AG04450 (cell line): ENCODE measurements at regions of chr14 and their contacts with region 1.

Region 1: DNA sequence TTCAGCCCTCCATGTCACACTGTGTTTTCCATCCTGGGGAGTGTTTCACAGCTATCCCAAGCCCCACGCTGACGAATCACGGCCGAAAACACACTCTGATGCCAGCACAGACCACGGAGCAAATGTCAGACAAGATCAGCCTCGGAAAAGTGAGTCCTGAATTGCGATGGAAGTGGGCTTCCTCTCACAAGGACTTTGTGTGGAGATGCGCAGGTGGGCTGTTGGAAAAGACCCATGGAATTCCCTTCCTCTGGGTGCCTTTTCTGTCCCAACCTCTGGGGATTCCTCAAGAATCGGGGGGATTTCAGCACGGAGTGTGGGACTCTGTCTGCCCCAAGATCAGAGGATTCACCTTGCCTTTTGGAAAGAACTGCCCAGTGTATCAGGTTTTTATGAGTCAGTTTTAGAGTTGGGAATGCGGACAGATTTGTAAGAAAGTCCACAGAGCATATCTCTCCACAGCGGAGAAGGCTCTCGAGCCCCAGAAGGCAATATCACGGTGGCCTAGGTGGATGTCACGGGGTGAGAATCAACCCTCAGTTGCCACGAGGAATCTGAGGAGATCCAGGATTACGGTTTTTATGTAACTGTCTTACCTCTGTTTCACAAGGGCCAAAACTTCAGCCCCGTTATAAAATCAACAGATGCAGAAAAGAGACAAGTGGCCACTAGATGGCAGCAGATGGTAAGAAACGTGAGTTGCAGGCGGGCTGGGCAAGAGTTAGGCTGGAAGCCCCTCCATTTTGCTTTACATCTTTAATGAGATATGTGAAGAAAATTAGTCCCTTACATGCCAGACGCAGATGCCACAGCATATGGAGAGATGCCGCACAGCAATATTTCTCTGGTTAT is 201.9 kb downstream of the DAD1 start:
- DNase-seq: peak; percentile 47
- H3K4me3 ChIP-seq: no peak overlapping the region
- H3K27ac ChIP-seq: no peak overlapping the region
- H3K27me3 ChIP-seq: peaks cover 5% of the 10 kb centered on the region
- CTCF ChIP-seq: peak; percentile 74

Region 2: DNA sequence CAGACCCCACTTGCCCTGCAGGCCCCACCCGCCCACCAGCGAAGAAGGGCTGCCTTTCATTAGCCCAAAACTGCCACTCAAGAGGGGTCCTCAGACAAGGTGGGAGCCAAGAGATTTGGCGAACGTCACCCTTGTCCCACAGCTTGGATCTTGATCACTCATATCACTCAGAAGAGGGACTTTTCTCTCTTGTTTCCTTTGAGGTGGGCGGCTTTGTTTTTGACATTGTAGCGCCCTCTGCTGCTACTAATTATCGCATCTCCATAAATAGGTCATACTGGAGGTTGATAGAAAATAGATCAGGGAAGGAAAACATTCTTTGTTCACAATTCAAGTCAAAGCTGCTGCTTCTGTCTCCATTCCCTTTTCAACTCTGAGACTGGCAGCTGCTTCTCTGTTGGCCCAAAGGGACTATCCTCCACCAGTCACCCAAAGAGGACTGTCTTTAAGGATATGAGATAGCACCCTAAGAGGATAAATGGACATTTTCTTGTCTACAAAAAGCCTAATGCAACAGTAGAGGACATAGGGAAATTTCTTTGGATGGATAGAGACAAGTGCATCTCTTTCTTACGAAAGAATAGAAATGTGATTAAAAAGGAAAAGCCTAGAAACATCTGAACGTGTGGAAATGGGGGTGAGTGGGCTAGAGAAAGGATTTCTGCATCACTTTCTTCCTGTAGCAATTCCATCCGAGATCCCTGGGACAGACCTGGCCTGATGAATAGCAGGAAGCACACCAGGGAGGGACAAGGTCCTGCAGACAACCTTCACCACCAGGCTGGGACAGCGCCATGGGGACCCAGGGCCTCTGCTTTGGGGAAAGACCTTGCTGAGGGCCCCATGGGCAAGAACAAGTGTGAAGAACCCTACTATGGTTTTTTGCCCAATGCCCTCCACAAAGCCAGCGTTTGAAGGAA is 86.0 kb after region 1 on chr14:
- CTCF ChIA-PET with region 1: interaction called, 59 read pairs
- POLR2A ChIA-PET with region 1: no interaction called
- DNase-seq: no peak
- H3K4me3 ChIP-seq: no peak overlapping the region
- H3K27ac ChIP-seq: no peak overlapping the region
- H3K27me3 ChIP-seq: peaks cover 16% of the 10 kb centered on the region
- CTCF ChIP-seq: peak; percentile 41

Region 3: GRCh38 chr14:22502007-22502406 is 114.9 kb after region 1 on chr14:
- CTCF ChIA-PET with region 1: no interaction called
- POLR2A ChIA-PET with region 1: no interaction called
- DNase-seq: no peak
- H3K4me3 ChIP-seq: no peak overlapping the region
- H3K27ac ChIP-seq: no peak overlapping the region
- H3K27me3 ChIP-seq: peaks cover 6% of the 10 kb centered on the region
- CTCF ChIP-seq: no peak

Region 4: GRCh38 chr14:22664261-22664660 is 277.1 kb after region 1 on chr14:
- CTCF ChIA-PET with region 1: no interaction called
- POLR2A ChIA-PET with region 1: no interaction called
- DNase-seq: no peak
- H3K4me3 ChIP-seq: no peak overlapping the region
- H3K27ac ChIP-seq: no peak overlapping the region
- H3K27me3 ChIP-seq: peaks cover 9% of the 10 kb centered on the region
- CTCF ChIP-seq: no peak

Region 5: GRCh38 chr14:22678221-22678620 is 291.1 kb after region 1 on chr14:
- CTCF ChIA-PET with region 1: no interaction called
- POLR2A ChIA-PET with region 1: no interaction called
- DNase-seq: no peak
- H3K4me3 ChIP-seq: no peak overlapping the region
- H3K27ac ChIP-seq: no peak overlapping the region
- H3K27me3 ChIP-seq: peaks cover 11% of the 10 kb centered on the region
- CTCF ChIP-seq: no peak